HCT116 (cell line): ENCODE measurements at regions of chr4 and their contacts with region 1.

Region 1: GRCh38 chr4:150867148-150867547 is 147.9 kb downstream of the LRBA start:
- DNase-seq: peak; percentile 73
- ATAC-seq: peak; percentile 79
- H3K4me3 ChIP-seq: no peak overlapping the region
- H3K27ac ChIP-seq: no peak overlapping the region
- H3K4me1 ChIP-seq: no peaks in the 10 kb centered on the region
- H3K27me3 ChIP-seq: no peaks in the 10 kb centered on the region
- CTCF ChIP-seq: peak; percentile 30 to 66 (median 64); a peak in 4 of 6 replicates
- POLR2A ChIP-seq: no peak
- RAD21 ChIP-seq: peak; percentile 81

Region 2: DNA sequence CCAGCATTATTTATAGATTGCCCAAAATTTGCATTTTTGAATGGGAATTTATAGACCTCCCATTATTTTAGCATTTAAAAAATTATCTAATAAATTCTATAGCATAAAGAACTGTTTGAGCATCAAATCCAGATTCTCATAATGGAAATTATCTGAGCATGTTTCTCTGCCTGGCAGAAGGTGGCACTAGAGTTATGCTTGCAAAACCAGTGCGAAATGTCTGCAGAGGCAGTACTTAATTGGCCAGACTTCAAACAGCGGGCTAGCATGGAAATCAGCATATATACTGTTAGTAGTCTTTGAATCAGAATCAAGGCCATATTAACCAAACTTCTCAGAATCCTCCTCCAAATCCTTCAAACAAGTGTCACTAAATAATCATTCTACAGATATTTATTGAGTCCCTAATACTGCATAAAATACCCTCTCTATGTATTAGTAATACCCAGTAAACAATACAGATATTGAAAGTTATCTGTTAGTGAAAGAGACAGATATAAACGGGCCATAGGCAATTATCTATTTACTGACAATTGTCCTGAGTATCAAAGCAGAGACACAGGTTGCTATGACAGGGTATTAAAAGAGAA is 867.6 kb before region 1 on chr4:
- CTCF ChIA-PET with region 1: interaction called, 3 read pairs
- POLR2A ChIA-PET with region 1: no interaction called
- RAD21 ChIA-PET with region 1: no interaction called
- intact Hi-C with region 1: loop called (anchors 5 kb)
- DNase-seq: peak; percentile 60
- ATAC-seq: peak; percentile 74
- H3K4me3 ChIP-seq: no peak overlapping the region
- H3K27ac ChIP-seq: no peak overlapping the region
- H3K4me1 ChIP-seq: peaks cover 0 to 31% of the 10 kb centered on the region in 2 experiments; a peak in 2 of 4 replicates
- H3K27me3 ChIP-seq: no peaks in the 10 kb centered on the region
- CTCF ChIP-seq: peak; percentile 65 to 77 (median 76)
- POLR2A ChIP-seq: no peak
- RAD21 ChIP-seq: peak; percentile 91

Region 3: GRCh38 chr4:150010525-150011126 is 856.5 kb before region 1 on chr4:
- CTCF ChIA-PET with region 1: interaction called, 3 read pairs
- POLR2A ChIA-PET with region 1: no interaction called
- RAD21 ChIA-PET with region 1: no interaction called
- intact Hi-C with region 1: loop called (anchors 2 kb)
- DNase-seq: peak; percentile 63
- ATAC-seq: peak; percentile 91
- H3K4me3 ChIP-seq: no peak overlapping the region
- H3K27ac ChIP-seq: no peak overlapping the region
- H3K4me1 ChIP-seq: peaks cover 0 to 8% of the 10 kb centered on the region in 2 experiments; a peak in 2 of 4 replicates
- H3K27me3 ChIP-seq: no peaks in the 10 kb centered on the region
- CTCF ChIP-seq: peak; percentile 59 to 74 (median 64); a peak in 5 of 6 replicates
- POLR2A ChIP-seq: no peak
- RAD21 ChIP-seq: peak; percentile 79

Region 4: GRCh38 chr4:150297861-150298474 is 569.2 kb before region 1 on chr4:
- CTCF ChIA-PET with region 1: interaction called, 15 read pairs
- POLR2A ChIA-PET with region 1: no interaction called
- RAD21 ChIA-PET with region 1: no interaction called
- intact Hi-C with region 1: loop called (anchors 1 kb)
- DNase-seq: peak; percentile 45
- ATAC-seq: peak; percentile 54
- H3K4me3 ChIP-seq: no peak overlapping the region
- H3K27ac ChIP-seq: no peak overlapping the region
- H3K4me1 ChIP-seq: peaks cover 0 to 5% of the 10 kb centered on the region in 2 experiments; a peak in 1 of 4 replicates
- H3K27me3 ChIP-seq: no peaks in the 10 kb centered on the region
- CTCF ChIP-seq: peak; percentile 52 to 81 (median 68); a peak in 5 of 6 replicates
- POLR2A ChIP-seq: no peak
- RAD21 ChIP-seq: peak; percentile 83

Region 5: DNA sequence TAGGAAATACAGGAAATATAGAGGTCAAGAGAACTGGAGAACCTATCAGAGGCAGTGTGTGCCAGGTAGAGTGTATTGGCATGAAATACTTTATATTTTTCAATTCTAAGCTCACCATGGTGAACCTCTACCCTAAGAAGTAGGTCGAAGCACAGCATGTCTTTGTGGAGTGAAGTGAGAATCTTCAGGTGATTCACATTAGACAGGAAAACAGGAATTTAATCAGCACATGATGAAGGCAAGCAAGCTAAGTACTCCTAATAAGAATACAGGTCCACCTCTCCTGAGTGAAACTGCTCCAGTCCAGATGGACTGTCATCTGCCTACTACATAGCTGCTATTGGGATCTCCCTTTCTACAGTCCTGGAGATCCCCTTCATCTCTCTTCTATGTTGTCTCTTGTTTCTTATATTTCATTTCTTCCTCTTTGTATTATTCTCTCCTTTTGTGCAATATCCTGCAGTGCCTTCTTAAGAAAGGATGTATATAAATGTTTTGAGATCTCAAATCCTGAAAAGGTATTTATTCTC is 11.1 kb before region 1 on chr4:
- CTCF ChIA-PET with region 1: interaction called, 11 read pairs
- POLR2A ChIA-PET with region 1: no interaction called
- RAD21 ChIA-PET with region 1: no interaction called
- intact Hi-C with region 1: no loop called
- DNase-seq: no peak
- ATAC-seq: no peak
- H3K4me3 ChIP-seq: no peak overlapping the region
- H3K27ac ChIP-seq: no peak overlapping the region
- H3K4me1 ChIP-seq: no peaks in the 10 kb centered on the region
- H3K27me3 ChIP-seq: no peaks in the 10 kb centered on the region
- CTCF ChIP-seq: no peak
- POLR2A ChIP-seq: no peak
- RAD21 ChIP-seq: no peak